Activated naive CD4-positive, alpha-beta T cell treated with anti-CD3 and anti-CD28 coated beads for 36 hours (primary cell): ENCODE measurements at regions of chr17 and their contacts with region 1.

Region 1: DNA sequence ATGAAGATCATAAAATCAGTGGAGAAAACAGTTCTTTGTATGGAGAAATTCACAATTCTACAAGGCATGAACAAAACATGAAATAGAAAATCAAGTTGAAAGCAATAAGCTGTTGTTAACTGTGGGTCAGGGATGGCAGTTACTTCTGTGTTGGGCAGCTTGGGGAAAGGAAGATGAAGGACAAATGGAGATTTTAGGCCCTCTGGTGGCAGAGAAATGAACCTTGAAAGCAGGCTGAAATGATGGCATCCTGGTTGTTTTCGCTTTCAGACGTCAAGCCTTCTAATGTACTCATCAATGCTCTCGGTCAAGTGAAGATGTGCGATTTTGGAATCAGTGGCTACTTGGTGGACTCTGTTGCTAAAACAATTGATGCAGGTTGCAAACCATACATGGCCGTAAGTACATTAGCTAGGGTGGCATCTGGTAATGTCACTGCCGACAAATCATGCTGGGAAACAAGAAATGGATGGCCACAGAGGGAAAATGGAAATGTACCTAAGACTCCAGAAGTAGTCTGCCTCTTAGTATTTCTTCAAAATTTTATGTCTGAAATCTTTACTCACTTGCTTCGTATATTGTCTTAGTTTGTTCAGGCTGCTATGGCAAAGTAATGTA is 108.9 kb downstream of the MAP2K6 start:
- DNase-seq: peak; percentile 33
- H3K4me3 Mint-ChIP-seq: no peak overlapping the region
- H3K27ac Mint-ChIP-seq: no peak overlapping the region
- H3K4me1 Mint-ChIP-seq: no peaks in the 10 kb centered on the region
- H3K27me3 Mint-ChIP-seq: no peaks in the 10 kb centered on the region

Region 2: GRCh38 chr17:69335058-69335457 is 188.3 kb before region 1 on chr17:
- CTCF ChIA-PET with region 1: interaction called, 11 read pairs
- intact Hi-C with region 1: loop called (anchors 1 kb)
- DNase-seq: no peak
- H3K4me3 Mint-ChIP-seq: no peak overlapping the region
- H3K27ac Mint-ChIP-seq: no peak overlapping the region
- H3K4me1 Mint-ChIP-seq: peaks cover 5% of the 10 kb centered on the region
- H3K27me3 Mint-ChIP-seq: peaks cover 5% of the 10 kb centered on the region

Region 3: DNA sequence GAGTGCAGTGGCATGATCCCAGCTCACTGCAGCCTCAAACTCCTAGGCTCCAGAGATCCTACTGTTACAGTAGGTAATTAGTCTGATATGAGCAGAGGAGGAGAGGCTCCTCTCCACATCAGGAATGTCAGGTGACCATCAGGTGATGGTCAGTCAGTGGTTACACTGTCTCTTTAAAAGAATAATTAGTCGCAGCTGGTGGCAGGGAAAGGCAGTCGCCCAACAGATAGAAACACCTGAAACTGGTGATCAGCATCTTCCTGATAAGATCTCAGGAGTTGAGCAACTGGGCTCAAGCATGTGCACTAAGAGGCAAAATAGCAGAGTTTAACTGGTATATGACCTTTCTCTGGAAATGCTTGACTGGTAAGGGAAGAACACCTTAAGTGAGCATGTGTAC is 174.9 kb before region 1 on chr17:
- CTCF ChIA-PET with region 1: no interaction called
- intact Hi-C with region 1: no loop called
- DNase-seq: no peak
- H3K4me3 Mint-ChIP-seq: no peak overlapping the region
- H3K27ac Mint-ChIP-seq: no peak overlapping the region
- H3K4me1 Mint-ChIP-seq: no peaks in the 10 kb centered on the region
- H3K27me3 Mint-ChIP-seq: peaks cover 4% of the 10 kb centered on the region

Region 4: GRCh38 chr17:69414408-69415274 is 108.7 kb before region 1 on chr17 and contains the start of gene MAP2K6:
- CTCF ChIA-PET with region 1: interaction called, 5 read pairs
- intact Hi-C with region 1: loop called (anchors 5 kb)
- DNase-seq: peak; percentile 88
- H3K4me3 Mint-ChIP-seq: no peak within 1 kb of the TSS
- H3K27ac Mint-ChIP-seq: no peak within 1 kb of the TSS
- H3K4me1 Mint-ChIP-seq: peaks cover 15% of the 10 kb centered on the region
- H3K27me3 Mint-ChIP-seq: no peaks in the 10 kb centered on the region
- total RNA-seq, gene MAP2K6: 2.4 to 2.7 TPM

Region 5: DNA sequence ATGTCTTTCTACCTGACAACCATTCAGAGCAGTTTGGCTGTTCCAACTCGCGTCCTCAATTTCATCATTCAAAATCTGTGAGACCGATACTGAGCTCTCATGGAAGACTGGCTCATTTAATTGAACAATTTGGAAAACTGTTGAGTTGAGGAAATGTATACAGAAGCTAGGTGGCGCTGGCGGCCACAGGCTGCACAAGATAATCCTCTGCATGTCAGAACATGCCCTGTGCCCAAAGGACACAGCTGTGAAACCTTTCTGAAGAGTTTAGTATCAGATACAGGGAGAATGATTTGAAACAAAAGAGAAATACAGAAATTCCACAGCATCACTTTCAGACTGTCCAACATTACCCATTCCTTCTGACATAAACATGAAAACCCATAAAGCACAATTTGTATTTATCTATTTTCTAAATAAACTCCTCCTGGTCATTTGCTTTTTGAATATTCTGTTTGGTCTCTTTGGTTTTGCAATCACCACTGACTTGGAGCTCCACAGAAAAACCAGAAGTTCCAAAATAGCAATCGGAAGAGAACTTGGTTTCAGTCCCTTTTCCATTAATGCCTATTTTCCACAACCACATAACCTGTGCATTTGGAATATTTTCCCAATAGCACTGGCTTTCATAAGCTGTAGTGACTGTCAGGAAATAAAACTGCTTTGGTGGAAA is 83.9 kb after region 1 on chr17:
- CTCF ChIA-PET with region 1: interaction called, 4 read pairs
- intact Hi-C with region 1: loop called (anchors 5 kb)
- DNase-seq: peak; percentile 78
- H3K4me3 Mint-ChIP-seq: no peak overlapping the region
- H3K27ac Mint-ChIP-seq: peak overlapping the region; percentile 73
- H3K4me1 Mint-ChIP-seq: peaks cover 14% of the 10 kb centered on the region
- H3K27me3 Mint-ChIP-seq: peaks cover 7% of the 10 kb centered on the region

Region 6: DNA sequence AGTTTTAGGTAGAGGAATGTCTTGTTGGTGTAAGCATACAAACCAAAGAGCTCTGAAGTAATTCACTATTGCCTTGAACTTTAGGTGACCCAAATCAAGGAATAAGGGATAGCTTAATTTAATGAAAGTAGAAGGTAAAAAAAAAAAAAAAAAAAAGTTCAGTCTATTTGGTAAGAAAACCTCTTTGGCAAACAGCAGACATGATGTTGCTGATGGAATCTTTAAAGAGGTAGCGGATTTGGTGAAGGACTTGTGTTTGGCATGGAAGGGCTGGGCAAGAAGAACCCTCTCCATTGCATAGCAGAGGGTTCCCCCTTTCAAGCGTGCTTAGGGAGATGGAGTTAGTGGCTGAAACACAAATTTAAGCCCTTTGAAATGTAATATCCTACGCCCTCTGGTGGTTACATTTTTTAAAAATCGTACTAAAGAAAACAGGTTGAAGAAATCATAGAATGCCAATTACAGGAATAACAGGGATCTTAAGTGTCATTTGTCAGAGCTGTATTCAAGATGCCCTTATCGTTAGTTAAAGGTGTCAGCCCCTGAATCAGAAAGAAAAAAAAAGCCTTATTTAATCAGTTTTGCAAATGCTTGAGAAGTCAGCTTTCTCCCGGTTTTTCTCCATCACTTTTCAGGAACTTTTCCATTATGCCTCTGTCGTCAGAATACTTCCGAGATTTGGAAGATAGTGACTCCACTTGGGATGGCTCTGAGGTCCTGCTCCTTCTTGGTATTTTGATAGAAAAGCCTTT is 1029.1 kb after region 1 on chr17:
- CTCF ChIA-PET with region 1: no interaction called
- intact Hi-C with region 1: loop called (anchors 5 kb)
- DNase-seq: no peak
- H3K4me3 Mint-ChIP-seq: no peak overlapping the region
- H3K27ac Mint-ChIP-seq: no peak overlapping the region
- H3K4me1 Mint-ChIP-seq: no peaks in the 10 kb centered on the region
- H3K27me3 Mint-ChIP-seq: no peaks in the 10 kb centered on the region